ENCODE measurements at regions of chr5 and their contacts with region 1.

Region 1: GRCh38 chr5:132850066-132850465 is 16.2 kb downstream of the GDF9 start:
- DNase-seq: no peak
- CTCF ChIP-seq: no peak

Region 2: GRCh38 chr5:132704875-132705274 is 145.2 kb before region 1 on chr5:
- CTCF ChIA-PET with region 1: no interaction called
- POLR2A ChIA-PET with region 1: no interaction called
- DNase-seq: no peak
- CTCF ChIP-seq: no peak

Region 3: GRCh38 chr5:132866342-132867045 is 16.4 kb after region 1 on chr5 and contains the starts of genes GDF9 and UQCRQ:
- CTCF ChIA-PET with region 1: interaction called, 63 read pairs
- POLR2A ChIA-PET with region 1: no interaction called
- DNase-seq: peak; percentile 98
- CTCF ChIP-seq: no peak

Measured in GM10248 (cell line).